Activated naive CD4-positive, alpha-beta T cell treated with anti-CD3 and anti-CD28 coated beads for 36 hours (primary cell): ENCODE measurements at regions of chr20 and their contacts with region 1.

Region 1: GRCh38 chr20:63580796-63581461 is 6.9 kb upstream of the HELZ2 start:
- DNase-seq: peak; percentile 88
- H3K4me3 Mint-ChIP-seq: no peak overlapping the region
- H3K27ac Mint-ChIP-seq: no peak overlapping the region
- H3K4me1 Mint-ChIP-seq: peaks cover 5% of the 10 kb centered on the region
- H3K27me3 Mint-ChIP-seq: no peaks in the 10 kb centered on the region

Region 2: GRCh38 chr20:63553227-63553932 is 27.5 kb before region 1 on chr20:
- CTCF ChIA-PET with region 1: no interaction called
- intact Hi-C with region 1: loop called (anchors 2 kb)
- DNase-seq: peak; percentile 93
- H3K4me3 Mint-ChIP-seq: peak overlapping the region; percentile 47
- H3K27ac Mint-ChIP-seq: no peak overlapping the region
- H3K4me1 Mint-ChIP-seq: peaks cover 13% of the 10 kb centered on the region
- H3K27me3 Mint-ChIP-seq: no peaks in the 10 kb centered on the region

Region 3: DNA sequence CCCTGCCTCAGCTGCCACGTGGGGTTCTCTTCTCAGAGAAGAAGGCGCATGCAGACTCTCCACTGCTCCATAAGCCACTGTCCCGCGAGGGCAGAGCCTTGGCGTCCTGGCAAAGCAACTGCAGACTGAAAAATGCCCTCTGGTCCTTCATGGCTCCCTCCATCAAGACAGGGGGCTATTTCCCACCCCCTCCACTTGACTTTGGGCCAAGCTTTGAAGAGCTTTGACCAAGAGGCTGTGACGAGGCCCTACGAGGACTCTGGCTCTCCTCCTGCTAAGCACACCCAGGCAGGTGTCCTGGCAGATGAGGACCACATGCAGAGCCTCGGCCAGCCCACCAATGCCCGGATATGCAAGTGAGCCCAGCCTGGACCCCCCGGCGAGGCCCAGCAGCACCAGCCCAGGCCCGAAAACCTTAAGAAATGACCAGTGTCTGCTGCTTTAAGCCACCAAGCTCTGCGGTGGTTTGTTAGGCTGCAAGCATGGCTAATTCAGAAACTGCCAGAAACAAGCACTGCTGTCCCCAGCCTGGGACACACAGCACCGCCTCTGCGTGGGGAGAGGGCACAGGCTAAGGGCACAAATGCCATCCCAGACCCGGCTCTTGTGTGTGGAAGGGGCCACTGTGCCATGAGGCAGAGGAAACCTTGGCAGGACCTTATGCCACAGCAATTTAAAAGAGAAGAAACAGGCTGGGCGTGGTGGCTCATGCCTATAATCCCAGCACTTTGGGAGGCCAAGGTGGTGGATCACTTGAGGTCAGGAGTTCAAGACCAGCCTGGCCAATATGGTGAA is 29.9 kb after region 1 on chr20:
- CTCF ChIA-PET with region 1: no interaction called
- intact Hi-C with region 1: no loop called
- DNase-seq: no peak
- H3K4me3 Mint-ChIP-seq: no peak overlapping the region
- H3K27ac Mint-ChIP-seq: no peak overlapping the region
- H3K4me1 Mint-ChIP-seq: peaks cover 6% of the 10 kb centered on the region
- H3K27me3 Mint-ChIP-seq: no peaks in the 10 kb centered on the region

Region 4: DNA sequence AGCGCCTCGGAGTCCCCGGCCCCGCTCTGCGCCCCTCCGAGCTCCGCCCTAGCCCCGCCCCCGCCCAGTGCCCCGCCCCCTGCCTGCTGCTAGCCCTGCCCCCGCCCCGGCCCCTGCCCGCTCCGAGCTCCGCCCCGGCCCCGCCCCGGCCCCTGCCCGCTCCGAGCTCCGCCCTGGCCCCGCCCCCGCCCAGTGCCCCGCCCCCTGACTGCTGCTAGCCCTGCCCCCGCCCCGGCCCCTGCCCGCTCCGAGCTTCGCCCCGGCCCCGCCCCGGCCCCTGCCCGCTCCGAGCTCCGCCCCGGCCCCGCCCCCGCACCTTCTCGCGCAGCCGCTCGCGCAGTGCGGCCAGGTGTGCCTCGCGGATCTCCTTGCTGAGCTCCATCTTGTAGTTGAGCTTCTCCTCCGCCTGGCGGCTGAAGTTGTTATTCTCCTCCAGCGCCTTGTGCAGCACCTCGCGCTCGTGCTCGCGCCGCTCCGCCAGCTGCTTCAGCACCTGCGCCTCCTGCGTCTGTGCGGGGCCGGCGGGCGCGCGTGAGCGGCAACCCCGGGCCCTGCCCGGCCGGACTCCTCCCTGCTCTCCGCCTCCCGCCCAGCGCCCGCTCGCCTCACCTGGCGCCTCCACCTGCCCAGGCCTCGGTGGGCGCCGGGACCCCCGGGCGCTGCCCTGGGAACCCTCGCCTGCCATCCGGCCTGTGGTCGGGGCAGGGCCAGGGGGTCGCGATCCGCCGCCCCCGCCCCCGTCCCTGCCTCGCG is 61.0 kb after region 1 on chr20:
- CTCF ChIA-PET with region 1: no interaction called
- intact Hi-C with region 1: loop called (anchors 1 kb)
- DNase-seq: peak; percentile 95
- H3K4me3 Mint-ChIP-seq: peak overlapping the region; percentile 76
- H3K27ac Mint-ChIP-seq: no peak overlapping the region
- H3K4me1 Mint-ChIP-seq: peaks cover 33% of the 10 kb centered on the region
- H3K27me3 Mint-ChIP-seq: no peaks in the 10 kb centered on the region

Region 5: DNA sequence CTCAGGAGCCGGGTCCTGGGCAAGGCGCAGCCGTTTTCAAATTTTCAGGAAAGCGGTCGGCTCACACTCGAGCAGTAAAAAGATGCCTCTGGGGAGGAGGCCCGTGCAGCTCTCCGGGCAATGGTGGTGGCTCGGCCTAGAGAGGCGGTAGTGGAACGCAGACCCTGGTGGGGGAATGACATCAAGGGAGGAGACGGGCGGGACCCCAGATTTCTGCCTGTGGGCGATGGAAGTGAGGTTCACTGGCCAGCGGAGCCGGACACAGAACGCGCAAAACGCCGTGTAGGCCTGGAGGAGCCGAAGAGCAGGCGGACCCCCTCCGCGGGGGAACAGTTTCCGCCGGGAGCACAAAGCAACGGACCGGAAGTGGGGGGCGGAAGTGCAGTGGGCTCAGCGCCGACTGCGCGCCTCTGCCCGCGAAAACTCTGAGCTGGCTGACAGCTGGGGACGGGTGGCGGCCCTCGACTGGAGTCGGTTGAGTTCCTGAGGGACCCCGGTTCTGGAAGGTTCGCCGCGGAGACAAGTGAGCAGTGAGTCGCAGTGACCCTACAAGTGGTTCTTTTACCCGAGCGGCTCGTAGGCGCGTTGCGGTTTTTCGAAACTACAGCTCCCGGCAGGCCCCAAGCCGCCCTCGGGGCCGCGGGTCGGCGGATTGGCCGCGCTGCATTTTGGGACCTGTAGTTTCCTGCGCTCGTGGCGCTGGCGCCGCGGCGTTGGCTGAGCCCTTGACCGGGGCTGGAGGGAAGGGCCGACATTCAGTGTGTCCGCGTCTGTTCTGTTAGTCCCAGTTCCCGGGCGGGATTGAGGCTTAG is 77.2 kb after region 1 on chr20 and contains the start of gene RTEL1:
- CTCF ChIA-PET with region 1: no interaction called
- intact Hi-C with region 1: loop called (anchors 5 kb)
- DNase-seq: peak; percentile 88
- H3K4me3 Mint-ChIP-seq: peak within 1 kb of the TSS; percentile 98
- H3K27ac Mint-ChIP-seq: peak within 1 kb of the TSS; percentile 93
- H3K4me1 Mint-ChIP-seq: peaks cover 38% of the 10 kb centered on the region
- H3K27me3 Mint-ChIP-seq: no peaks in the 10 kb centered on the region
- total RNA-seq, gene RTEL1: 33.6 to 34.8 TPM

Region 6: GRCh38 chr20:63791497-63792156 is 210.7 kb after region 1 on chr20:
- CTCF ChIA-PET with region 1: no interaction called
- intact Hi-C with region 1: loop called (anchors 2 kb)
- DNase-seq: no peak
- H3K4me3 Mint-ChIP-seq: no peak overlapping the region
- H3K27ac Mint-ChIP-seq: no peak overlapping the region
- H3K4me1 Mint-ChIP-seq: peaks cover 5% of the 10 kb centered on the region
- H3K27me3 Mint-ChIP-seq: peaks cover 5% of the 10 kb centered on the region

Region 7: DNA sequence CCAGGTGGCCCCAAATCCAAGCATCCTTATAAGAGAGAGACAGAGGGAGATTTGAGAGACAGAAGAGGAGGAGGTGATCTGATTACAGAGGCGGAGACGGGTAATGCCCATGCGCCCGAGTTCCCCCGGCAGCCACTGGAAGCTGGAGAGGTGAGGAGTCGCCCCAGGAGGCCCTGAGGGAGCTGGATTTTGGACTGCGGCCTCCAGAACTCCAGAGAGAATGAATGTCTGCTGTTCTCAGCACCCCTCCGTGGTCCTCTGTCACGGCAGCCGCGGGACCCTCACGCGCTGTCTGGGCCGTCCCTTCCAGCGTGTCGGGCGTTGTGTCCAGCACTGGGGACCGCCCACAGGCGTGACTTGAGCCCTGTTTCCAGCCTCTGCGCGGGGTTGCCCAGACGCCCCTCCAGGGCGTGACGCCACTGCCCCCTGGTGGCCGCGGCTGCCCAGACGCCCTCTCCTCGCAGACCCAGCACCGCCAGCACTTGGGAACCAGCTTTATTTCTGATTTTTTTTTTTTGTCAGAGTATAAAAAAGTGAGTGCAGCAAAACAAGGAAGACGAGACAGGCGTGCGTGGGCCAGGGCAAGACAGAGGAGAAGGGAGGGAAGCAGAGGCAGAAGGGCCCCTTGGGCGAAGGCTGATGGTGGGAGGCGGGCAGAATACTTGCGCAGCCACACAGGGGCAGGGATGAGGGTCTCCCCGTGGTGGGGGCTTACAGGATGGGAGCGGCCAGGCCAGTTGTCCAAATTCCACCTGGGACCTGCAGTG is 392.9 kb after region 1 on chr20:
- CTCF ChIA-PET with region 1: no interaction called
- intact Hi-C with region 1: loop called (anchors 2 kb)
- DNase-seq: peak; percentile 79
- H3K4me3 Mint-ChIP-seq: no peak overlapping the region
- H3K27ac Mint-ChIP-seq: peak overlapping the region; percentile 15
- H3K4me1 Mint-ChIP-seq: peaks cover 41% of the 10 kb centered on the region
- H3K27me3 Mint-ChIP-seq: no peaks in the 10 kb centered on the region